GM10248 (cell line): ENCODE measurements at regions of chr5 and their contacts with region 1.

Region 1: GRCh38 chr5:111278845-111279504 is 54.8 kb downstream of the CAMK4 start:
- DNase-seq: peak; percentile 56
- CTCF ChIP-seq: peak; percentile 69

Region 2: GRCh38 chr5:111172504-111172903 is 106.5 kb before region 1 on chr5:
- CTCF ChIA-PET with region 1: interaction called, 14 read pairs
- POLR2A ChIA-PET with region 1: no interaction called
- DNase-seq: no peak
- CTCF ChIP-seq: no peak

Region 3: DNA sequence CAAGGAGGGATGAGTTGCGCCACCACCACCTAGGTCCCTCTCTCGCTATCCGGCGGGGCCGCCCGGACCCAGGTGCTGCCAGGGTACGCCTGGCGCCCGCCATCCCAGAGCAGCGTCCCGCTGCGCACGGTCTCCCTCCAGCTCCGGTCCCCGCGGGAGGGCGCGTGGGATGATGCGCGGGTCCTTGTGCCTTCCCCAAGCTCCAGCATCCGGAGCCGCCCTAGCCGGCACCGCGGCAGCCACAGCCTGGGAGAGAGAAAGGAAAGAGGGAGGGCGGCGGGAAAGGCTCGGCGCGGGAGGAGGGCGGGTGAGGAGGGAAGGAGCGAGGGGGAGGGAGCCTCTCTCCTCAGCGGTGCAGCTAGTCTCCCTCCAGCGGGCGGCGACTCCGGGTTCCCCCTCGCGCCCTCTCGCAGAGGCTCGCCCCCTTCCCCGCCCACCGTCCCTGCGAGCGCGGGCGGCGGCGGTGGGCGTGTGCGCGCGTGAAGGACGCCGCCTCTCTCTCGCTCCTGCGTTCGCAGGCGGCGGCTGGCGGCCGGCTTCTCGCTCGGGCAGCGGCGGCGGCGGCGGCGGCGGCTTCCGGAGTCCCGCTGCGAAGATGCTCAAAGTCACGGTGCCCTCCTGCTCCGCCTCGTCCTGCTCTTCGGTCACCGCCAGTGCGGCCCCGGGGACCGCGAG is 54.9 kb before region 1 on chr5 and contains the start of gene CAMK4:
- CTCF ChIA-PET with region 1: interaction called, 27 read pairs
- POLR2A ChIA-PET with region 1: no interaction called
- DNase-seq: peak; percentile 87
- CTCF ChIP-seq: peak; percentile 34

Region 4: GRCh38 chr5:111262815-111263214 is 16.2 kb before region 1 on chr5:
- CTCF ChIA-PET with region 1: interaction called, 32 read pairs
- POLR2A ChIA-PET with region 1: no interaction called
- DNase-seq: no peak
- CTCF ChIP-seq: no peak

Region 5: GRCh38 chr5:111299067-111299481 is 20.1 kb after region 1 on chr5:
- CTCF ChIA-PET with region 1: interaction called, 41 read pairs
- POLR2A ChIA-PET with region 1: no interaction called
- DNase-seq: no peak
- CTCF ChIP-seq: no peak